ENCODE measurements at regions of chr3 and their contacts with region 1.

Region 1: DNA sequence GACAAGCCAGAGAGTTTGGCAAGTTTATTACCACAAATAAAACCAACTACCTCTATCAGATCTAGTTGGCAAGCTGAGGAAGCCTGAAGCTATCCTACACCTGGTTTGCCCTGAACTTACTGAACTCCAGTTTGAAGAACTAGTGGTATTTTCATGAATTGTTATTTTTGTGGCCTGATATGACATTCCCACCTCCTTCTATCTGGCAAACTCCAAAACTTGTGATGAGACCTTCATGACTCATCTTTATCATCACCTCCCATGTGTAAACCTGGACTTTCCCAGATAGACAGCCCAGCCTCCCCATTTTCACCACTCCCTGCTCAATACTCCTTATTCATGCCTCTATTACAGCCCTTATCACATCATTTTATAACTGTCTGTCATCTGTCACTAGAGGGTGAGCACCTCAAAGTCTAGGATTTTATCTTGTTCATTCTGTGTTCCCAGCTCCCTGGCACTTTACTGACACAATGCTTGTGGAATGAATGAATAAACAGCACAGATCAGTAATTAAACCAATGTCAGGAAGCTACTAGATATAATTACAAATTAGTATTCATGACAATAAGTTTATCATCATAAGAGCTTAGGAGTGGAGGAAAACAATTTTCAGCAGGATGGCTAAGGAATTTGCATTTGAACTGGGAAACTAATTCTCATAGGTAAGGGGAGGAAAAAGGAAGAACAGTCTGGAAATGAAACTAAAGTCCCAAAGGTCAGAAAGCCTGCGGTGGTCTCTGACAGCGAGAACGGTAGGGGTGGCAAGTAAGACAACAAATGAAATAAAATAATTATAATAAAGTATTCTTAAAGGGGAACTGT is 13.2 kb upstream of the TRANK1 start:
- DNase-seq: no peak
- H3K4me3 ChIP-seq: no peak overlapping the region
- H3K27ac ChIP-seq: peak overlapping the region in 1 of 2 experiments; percentile 34; a peak in 2 of 4 replicates
- H3K4me1 ChIP-seq: peaks cover 12 to 29% of the 10 kb centered on the region in 2 experiments; a peak in 3 of 4 replicates
- H3K27me3 ChIP-seq: no peaks in the 10 kb centered on the region; the same call in 1 of the 2 replicates
- CTCF ChIP-seq: no peak
- EP300 ChIP-seq: 0 out of 4 replicates have a peak, but pooled peaks of 1 of the 2 experiments have one; percentile 14
- RAD21 ChIP-seq: no peak

Region 2: DNA sequence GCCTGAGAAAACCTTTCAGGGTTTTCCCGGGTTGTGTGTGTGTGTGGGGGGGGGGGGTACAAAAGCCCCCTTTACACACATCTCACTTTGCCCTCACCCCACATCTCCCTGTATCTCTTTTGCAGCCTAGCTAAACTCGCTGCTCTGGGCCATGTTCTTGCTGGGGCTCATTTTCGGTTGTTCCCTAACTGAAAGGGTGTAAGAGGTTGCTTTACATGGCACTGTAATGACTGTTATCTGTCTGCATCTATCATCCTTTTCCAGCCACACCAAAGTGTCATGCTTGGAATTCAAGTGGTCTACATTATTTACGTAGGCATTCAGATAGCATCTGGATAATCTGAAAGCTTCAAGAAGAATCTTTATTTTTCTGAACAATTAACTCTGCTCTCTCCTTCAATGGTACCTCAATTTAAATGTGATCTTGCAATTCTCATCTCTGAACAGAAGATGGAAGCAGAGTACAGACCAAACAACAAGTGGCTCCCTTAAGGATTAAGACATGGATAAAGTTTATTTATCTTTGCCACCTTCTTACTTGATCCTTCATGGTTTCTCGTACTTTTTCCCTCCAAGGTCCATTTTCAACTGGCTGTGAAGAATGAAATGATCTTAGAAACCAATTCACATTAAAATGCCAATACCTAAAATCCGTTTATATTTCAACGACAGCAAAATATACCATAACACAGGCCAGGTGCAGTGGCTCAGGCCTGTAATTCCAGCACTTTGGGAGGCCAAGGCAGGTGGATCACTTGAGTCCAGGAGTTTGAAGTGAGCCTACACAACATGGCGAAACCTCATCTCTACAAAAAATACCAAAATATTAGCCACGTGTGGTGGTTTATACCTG is 228.6 kb before region 1 on chr3:
- CTCF ChIA-PET with region 1: interaction called, 55 read pairs
- POLR2A ChIA-PET with region 1: no interaction called
- DNase-seq: peak; percentile 54
- H3K4me3 ChIP-seq: no peak overlapping the region; a peak in 1 of 4 replicates
- H3K27ac ChIP-seq: no peak overlapping the region
- H3K4me1 ChIP-seq: peaks cover 0 to 12% of the 10 kb centered on the region in 2 experiments; a peak in 2 of 4 replicates
- H3K27me3 ChIP-seq: no peaks in the 10 kb centered on the region
- CTCF ChIP-seq: peak; percentile 82
- EP300 ChIP-seq: no peak
- RAD21 ChIP-seq: peak; percentile 96

Region 3: DNA sequence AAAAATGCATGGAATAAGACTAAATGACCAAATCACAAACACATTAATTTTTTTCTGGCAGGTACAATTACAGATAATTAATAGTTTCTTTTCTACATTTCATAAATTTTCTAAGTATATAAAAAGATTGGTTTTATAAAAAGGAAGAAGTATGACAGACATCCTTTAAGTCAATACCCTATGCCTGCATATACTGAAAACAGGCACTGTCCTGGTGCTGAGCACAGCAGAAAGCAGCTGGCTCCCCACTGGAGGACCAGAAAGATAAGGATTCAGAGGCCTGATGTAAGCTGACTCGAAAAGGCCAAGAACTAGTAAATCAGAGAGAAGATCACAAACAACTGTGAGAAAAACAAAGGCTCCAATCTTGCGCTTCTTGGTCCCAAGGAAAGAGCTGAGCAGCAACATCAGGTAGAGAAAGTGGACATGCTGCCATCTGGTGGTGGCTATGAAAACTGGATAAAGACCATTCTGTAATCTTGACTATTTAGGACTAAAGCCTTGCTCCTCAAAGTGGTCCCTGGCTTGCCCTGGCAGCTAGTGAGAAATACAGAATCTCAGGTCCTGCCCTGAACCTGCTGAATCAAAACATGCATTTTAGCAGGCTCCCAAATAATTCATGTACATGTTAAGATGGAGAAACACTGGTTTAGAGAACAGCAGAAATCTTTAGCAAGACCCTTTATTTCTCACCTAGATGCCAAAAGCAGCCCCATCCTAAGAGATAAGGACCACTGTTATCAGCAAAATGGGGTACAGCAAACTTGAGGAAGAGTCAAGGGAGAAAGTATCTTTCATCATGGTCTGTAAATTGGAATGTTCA is 89.2 kb before region 1 on chr3:
- CTCF ChIA-PET with region 1: interaction called, 30 read pairs
- POLR2A ChIA-PET with region 1: interaction called, 3 read pairs
- DNase-seq: peak; percentile 56
- H3K4me3 ChIP-seq: peak overlapping the region in 1 of 2 experiments; percentile 43; a peak in 1 of 4 replicates
- H3K27ac ChIP-seq: no peak overlapping the region
- H3K4me1 ChIP-seq: peaks cover 0 to 9% of the 10 kb centered on the region in 2 experiments; a peak in 2 of 4 replicates
- H3K27me3 ChIP-seq: peaks cover 4% of the 10 kb centered on the region; the same call in 1 of the 2 replicates
- CTCF ChIP-seq: peak; percentile 83
- EP300 ChIP-seq: no peak
- RAD21 ChIP-seq: peak; percentile 89

Region 4: DNA sequence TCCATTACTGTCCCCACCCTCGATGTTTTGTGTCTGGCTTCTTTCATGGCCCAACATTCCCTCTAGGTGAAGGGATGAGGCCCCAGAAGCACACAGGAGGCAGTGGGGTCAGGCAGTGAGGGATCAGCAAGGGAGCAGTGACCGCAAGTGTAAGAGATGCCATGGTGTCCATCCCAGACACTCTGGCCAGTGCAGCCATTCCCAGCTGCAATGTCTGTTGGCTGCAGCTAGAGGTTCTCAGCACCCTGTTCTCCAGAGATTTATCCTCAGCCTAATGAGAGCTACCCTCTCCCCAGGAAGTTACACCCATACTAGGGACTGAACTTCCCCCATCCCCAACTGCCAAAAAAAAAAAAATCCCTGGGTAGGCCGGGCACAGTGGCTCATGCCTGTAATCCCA is 53.4 kb before region 1 on chr3:
- CTCF ChIA-PET with region 1: interaction called, 19 read pairs
- POLR2A ChIA-PET with region 1: no interaction called
- DNase-seq: peak; percentile 34
- H3K4me3 ChIP-seq: no peak overlapping the region
- H3K27ac ChIP-seq: no peak overlapping the region
- H3K4me1 ChIP-seq: peaks cover 6 to 7% of the 10 kb centered on the region in 2 experiments; a peak in 2 of 4 replicates
- H3K27me3 ChIP-seq: no peaks in the 10 kb centered on the region
- CTCF ChIP-seq: no peak
- EP300 ChIP-seq: no peak
- RAD21 ChIP-seq: peak; percentile 58

Region 5: GRCh38 chr3:36944012-36944640 is 13.9 kb before region 1 on chr3:
- CTCF ChIA-PET with region 1: interaction called, 12 read pairs
- POLR2A ChIA-PET with region 1: no interaction called
- DNase-seq: peak; percentile 66
- H3K4me3 ChIP-seq: peak overlapping the region in 1 of 2 experiments; percentile 17; a peak in 1 of 4 replicates
- H3K27ac ChIP-seq: no peak overlapping the region
- H3K4me1 ChIP-seq: no peaks in the 10 kb centered on the region
- H3K27me3 ChIP-seq: no peaks in the 10 kb centered on the region; the same call in 1 of the 2 replicates
- CTCF ChIP-seq: no peak
- EP300 ChIP-seq: no peak
- RAD21 ChIP-seq: no peak

Region 6: GRCh38 chr3:36993326-36994283 is 35.5 kb after region 1 on chr3 and contains the start of gene MLH1:
- CTCF ChIA-PET with region 1: interaction called, 37 read pairs
- POLR2A ChIA-PET with region 1: no interaction called
- DNase-seq: peak; percentile 84
- H3K4me3 ChIP-seq: peak within 1 kb of the TSS; percentile 81 to 94
- H3K27ac ChIP-seq: peak within 1 kb of the TSS; percentile 95 to 98
- H3K4me1 ChIP-seq: peaks cover 28 to 29% of the 10 kb centered on the region in 2 experiments; a peak in 3 of 4 replicates
- H3K27me3 ChIP-seq: no peaks in the 10 kb centered on the region
- CTCF ChIP-seq: no peak
- EP300 ChIP-seq: no peak; a peak in 2 of 4 replicates
- RAD21 ChIP-seq: 0 out of 2 replicates have a peak, but pooled peaks have one; percentile 7
- polyA plus RNA-seq, gene MLH1: 24.0 and 30.2 TPM in 2 replicates